Heart left ventricle (tissue), 16 donors: ENCODE measurements at regions of chr10 and their contacts with region 1.

Region 1: GRCh38 chr10:129030996-129031843 is 435.8 kb upstream of the MGMT start:
- DNase-seq: peak; percentile 47 to 78 (median 60)
- ATAC-seq: peak in 3 of 4 donors; percentile 88 to 97 (median 92)
- H3K4me3 ChIP-seq: no peak overlapping the region
- H3K27ac ChIP-seq: no peak overlapping the region
- H3K4me1 ChIP-seq: peaks cover 0 to 12% (median 2%) of the 10 kb centered on the region in 12 donors
- H3K27me3 ChIP-seq: peaks cover 0 to 39% (median 6%) of the 10 kb centered on the region in 9 donors
- CTCF ChIP-seq: peak; percentile 85 to 97 (median 93)
- POLR2A ChIP-seq: no peak

Region 2: DNA sequence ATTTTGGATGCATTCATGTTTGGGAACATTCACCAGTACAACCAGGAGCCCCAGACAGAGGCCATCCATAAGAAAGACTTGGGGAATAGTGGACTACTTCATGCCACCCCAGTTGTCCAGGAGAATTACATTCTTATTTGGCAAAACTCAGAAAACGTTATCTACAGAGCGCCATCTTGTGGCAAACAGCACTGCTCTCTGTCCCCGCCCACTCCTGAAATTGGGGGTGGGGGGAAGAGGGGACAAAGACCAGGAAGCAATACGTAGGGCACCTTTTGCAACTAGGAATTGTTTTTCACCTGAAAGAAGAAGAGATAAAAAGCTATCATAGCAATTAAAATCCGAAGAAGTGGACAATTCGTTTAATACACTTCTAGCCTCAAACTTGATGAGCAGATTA is 301.3 kb after region 1 on chr10:
- intact Hi-C with region 1: loop called (anchors 2 to 10 kb)
- DNase-seq: no peak
- ATAC-seq: no peak
- H3K4me3 ChIP-seq: no peak overlapping the region
- H3K27ac ChIP-seq: no peak overlapping the region
- H3K4me1 ChIP-seq: peaks cover 0 to 7% (median 0%) of the 10 kb centered on the region in 12 donors
- H3K27me3 ChIP-seq: peaks cover 0 to 12% (median 0%) of the 10 kb centered on the region in 9 donors
- CTCF ChIP-seq: peak; percentile 20 to 61 (median 46)
- POLR2A ChIP-seq: no peak

Region 3: DNA sequence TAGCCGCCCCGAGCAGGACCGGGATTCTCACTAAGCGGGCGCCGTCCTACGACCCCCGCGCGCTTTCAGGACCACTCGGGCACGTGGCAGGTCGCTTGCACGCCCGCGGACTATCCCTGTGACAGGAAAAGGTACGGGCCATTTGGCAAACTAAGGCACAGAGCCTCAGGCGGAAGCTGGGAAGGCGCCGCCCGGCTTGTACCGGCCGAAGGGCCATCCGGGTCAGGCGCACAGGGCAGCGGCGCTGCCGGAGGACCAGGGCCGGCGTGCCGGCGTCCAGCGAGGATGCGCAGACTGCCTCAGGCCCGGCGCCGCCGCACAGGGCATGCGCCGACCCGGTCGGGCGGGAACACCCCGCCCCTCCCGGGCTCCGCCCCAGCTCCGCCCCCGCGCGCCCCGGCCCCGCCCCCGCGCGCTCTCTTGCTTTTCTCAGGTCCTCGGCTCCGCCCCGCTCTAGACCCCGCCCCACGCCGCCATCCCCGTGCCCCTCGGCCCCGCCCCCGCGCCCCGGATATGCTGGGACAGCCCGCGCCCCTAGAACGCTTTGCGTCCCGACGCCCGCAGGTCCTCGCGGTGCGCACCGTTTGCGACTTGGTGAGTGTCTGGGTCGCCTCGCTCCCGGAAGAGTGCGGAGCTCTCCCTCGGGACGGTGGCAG is 435.6 kb after region 1 on chr10 and contains the start of gene MGMT:
- intact Hi-C with region 1: loop called in 2 of 10 experiments (anchors 5 to 10 kb)
- DNase-seq: peak; percentile 94 to 98 (median 96)
- ATAC-seq: peak; percentile 93 to 99 (median 98)
- H3K4me3 ChIP-seq: peak within 1 kb of the TSS; percentile 66 to 91 (median 82)
- H3K27ac ChIP-seq: peak within 1 kb of the TSS; percentile 26 to 93 (median 86)
- H3K4me1 ChIP-seq: peaks cover 0 to 18% (median 11%) of the 10 kb centered on the region in 12 donors
- H3K27me3 ChIP-seq: no peaks in the 10 kb centered on the region
- CTCF ChIP-seq: no peak
- POLR2A ChIP-seq: peak in 1 of 2 donors; percentile 81
- total RNA-seq, gene MGMT: 6.2 to 25.3 (median 14.8) TPM

Region 4: DNA sequence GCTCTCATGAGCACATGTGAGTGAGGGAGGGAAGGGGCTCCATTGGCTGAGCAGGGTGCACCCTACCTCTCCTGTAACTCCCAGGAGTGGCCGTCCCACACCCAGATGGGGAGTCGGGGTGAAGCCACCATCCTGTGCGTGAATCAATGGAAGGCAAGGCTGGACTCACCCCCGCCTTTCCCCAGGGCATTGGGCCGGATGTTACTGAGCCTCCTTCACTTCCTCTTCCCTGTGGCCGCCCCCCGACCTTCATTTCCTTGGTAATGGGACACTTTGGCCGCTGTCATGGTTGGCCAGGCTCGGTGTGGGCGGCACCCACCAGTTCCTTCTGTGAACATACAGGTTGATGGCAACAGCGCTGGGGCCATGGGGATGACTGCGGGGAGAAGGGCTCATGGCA is 644.8 kb after region 1 on chr10:
- intact Hi-C with region 1: no loop called
- DNase-seq: no peak
- ATAC-seq: no peak
- H3K4me3 ChIP-seq: no peak overlapping the region
- H3K27ac ChIP-seq: no peak overlapping the region
- H3K4me1 ChIP-seq: no peaks in the 10 kb centered on the region
- H3K27me3 ChIP-seq: no peaks in the 10 kb centered on the region
- CTCF ChIP-seq: no peak
- POLR2A ChIP-seq: no peak

Region 5: DNA sequence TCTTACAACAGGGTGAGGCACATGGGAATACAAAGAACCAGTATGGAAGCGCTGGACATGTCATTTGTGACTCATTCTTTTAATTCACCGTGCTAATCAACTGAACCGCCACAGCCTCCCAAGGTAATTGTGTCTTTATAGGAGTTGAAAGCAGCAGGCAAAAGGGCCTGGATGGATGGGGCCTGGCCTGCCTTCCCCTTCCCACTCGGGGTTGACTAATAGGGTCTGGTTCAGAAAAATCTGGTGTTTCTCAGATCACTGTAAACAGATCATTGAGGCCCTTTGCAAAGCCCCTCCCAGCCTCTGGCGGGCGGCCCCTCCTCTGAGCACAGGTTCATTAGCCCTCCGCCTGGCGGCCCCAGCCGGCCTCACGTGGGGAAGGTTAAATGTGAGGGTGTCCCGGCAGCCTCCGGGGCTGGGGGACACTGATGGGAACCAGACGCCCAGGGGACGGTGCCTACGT is 832.0 kb after region 1 on chr10:
- intact Hi-C with region 1: loop called in 3 of 10 experiments (anchors 10 kb)
- DNase-seq: no peak
- ATAC-seq: peak in 1 of 4 donors; percentile 64
- H3K4me3 ChIP-seq: no peak overlapping the region
- H3K27ac ChIP-seq: no peak overlapping the region
- H3K4me1 ChIP-seq: peaks cover 0 to 12% (median 0%) of the 10 kb centered on the region in 12 donors
- H3K27me3 ChIP-seq: no peaks in the 10 kb centered on the region
- CTCF ChIP-seq: no peak
- POLR2A ChIP-seq: no peak

Region 6: GRCh38 chr10:129971381-129972144 is 940.3 kb after region 1 on chr10:
- intact Hi-C with region 1: loop called (anchors 1 to 5 kb)
- DNase-seq: peak in 3 of 5 donors; percentile 53 to 79 (median 67)
- ATAC-seq: peak; percentile 34 to 94 (median 88)
- H3K4me3 ChIP-seq: peak overlapping the region; percentile 29 to 64 (median 50)
- H3K27ac ChIP-seq: no peak overlapping the region
- H3K4me1 ChIP-seq: peaks cover 6 to 58% (median 27%) of the 10 kb centered on the region in 12 donors
- H3K27me3 ChIP-seq: peaks cover 31 to 88% (median 66%) of the 10 kb centered on the region in 9 donors
- CTCF ChIP-seq: peak in 10 of 12 donors; percentile 55 to 84 (median 67)
- POLR2A ChIP-seq: no peak

Region 7: DNA sequence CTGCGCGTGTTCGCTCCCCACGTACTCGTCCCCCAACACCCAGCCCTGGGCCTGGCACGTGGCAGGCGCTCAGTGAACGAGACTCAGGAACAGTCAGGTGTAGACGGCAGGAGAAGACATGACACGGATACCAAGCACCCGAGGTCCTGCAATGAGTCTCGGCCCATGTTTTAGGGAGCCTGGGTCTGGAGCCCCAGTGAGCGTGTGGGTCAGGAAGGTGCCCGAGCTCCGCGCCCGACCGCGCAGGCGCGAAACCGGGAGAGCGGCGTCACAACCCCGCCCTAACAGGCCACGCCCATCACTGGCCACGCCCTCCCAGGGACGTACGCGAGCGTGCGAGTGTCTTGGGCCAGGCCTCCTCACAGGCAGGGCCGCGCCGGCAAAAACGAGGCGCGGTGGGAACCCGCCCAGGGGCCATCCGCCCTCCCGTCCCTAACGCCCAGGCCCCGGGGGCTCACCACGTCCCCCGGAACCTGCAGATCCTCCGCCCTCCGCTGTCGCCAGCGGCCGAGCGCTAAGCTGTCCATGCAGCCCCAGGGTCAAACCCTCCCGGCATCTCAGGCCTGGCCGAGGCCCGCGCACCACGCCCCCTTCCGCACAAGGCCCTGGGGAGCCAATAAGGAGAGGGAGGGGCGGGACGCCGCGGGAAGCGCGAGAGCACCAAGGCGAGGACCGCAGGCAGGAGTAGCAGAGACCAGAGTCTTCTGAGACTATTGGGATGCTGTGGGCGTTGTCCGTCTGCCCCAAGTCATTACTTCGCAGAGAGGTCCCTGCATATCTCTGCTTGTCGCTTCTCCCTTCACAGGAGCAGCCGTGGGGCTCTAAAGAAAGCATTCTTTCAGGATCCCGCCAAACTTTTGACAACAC is 1079.3 kb after region 1 on chr10 and contains the start of gene C10orf143:
- intact Hi-C with region 1: loop called in 1 of 10 experiments (anchors 10 kb)
- DNase-seq: peak; percentile 98 to 99 (median 98)
- ATAC-seq: peak; percentile 96 to 97 (median 96)
- H3K4me3 ChIP-seq: peak within 1 kb of the TSS; percentile 52 to 89 (median 78)
- H3K27ac ChIP-seq: peak within 1 kb of the TSS; percentile 74 to 97 (median 94)
- H3K4me1 ChIP-seq: peaks cover 0 to 26% (median 16%) of the 10 kb centered on the region in 12 donors
- H3K27me3 ChIP-seq: no peaks in the 10 kb centered on the region
- CTCF ChIP-seq: no peak
- POLR2A ChIP-seq: peak; percentile 9 to 86
- total RNA-seq, gene C10orf143: 0.32 to 3.3 (median 1.6) TPM in 8 of 9 donors, not detected in the other